ENCODE measurements at regions of chr3 and their contacts with region 1.

Region 1: DNA sequence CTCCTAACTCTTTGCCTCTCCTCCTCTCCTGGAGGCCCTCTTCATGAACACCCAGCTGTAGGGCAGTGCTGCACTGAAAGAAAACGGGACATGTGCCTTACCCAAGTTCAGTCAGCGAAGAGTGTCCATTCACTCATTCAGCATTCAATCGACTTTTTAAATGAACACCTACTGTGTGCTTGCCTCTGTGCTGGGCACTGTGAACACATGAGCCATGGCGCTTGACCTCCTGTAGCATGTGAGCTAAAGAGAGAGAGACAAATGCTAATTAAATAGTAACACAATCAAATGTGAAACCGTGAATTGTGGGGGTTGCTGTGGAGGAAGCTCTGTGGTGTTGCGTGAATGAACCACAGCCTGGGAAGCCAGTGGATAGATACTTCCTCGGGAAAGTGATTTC is 43.4 kb downstream of the ST6GAL1 start:
- DNase-seq: no peak
- H3K4me3 ChIP-seq: no peak overlapping the region
- H3K27ac ChIP-seq: peak overlapping the region; percentile 9 to 17
- H3K4me1 ChIP-seq: peaks cover 0 to 9% of the 10 kb centered on the region in 2 donors
- H3K27me3 ChIP-seq: no peaks in the 10 kb centered on the region
- CTCF ChIP-seq: no peak
- POLR2A ChIP-seq: no peak

Region 2: GRCh38 chr3:187006864-187007630 is 33.3 kb after region 1 on chr3:
- intact Hi-C with region 1: loop called (anchors 1 kb)
- DNase-seq: no peak
- H3K4me3 ChIP-seq: no peak overlapping the region
- H3K27ac ChIP-seq: no peak overlapping the region
- H3K4me1 ChIP-seq: no peaks in the 10 kb centered on the region
- H3K27me3 ChIP-seq: no peaks in the 10 kb centered on the region
- CTCF ChIP-seq: no peak
- POLR2A ChIP-seq: no peak

Measured in breast epithelium (tissue), 4 donors.